ENCODE measurements at regions of chr6 and their contacts with region 1.

Region 1: DNA sequence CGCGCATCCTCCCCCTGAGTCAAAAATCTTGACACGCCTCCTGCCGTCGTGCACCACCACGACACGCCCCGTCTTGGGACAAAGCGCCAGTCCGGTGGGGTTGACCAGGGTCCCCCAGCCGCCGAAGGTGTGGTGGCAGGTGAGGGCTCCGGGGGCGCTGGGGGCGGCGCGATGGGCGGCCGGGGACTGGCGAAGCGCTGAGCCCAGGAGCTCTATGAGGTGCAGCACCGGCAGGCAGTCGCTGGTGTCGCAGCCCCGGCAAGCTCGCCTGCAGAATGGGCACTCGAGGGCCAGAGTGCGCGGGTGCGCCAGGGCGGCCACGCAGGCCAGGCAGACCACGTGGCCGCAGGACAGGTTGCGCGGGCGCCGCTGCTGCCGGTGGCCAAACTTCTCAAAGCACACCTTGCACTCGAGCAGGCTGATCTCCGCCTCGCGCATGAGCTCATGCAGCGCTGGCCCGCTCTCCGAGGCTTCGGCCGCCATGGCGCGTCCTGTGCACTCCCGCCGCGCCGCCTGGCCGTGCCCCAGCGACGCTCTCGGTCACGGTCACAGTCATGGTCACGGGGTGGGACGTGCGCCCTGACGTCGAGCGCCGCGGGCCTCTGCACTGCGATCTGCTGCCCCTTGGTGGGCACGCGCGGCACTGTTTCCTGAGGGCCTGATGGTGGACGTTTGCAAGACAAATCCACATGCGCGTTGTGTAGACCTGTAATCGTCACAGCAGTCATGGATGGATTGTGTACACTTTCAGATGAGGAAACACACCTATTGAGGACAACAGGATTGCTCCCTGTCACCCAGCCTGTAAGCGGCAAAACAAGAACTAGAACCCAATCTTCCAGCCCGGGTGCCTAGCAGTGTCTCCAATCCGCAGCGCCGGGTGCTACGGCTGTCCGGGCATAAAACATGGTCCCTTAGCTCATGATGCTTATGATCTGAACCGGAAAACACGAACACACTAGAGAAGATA is at the start of gene NHLRC1:
- DNase-seq: peak; percentile 70 to 87
- H3K4me3 ChIP-seq: peak within 1 kb of the TSS in 3 of 4 experiments; percentile 19 to 44 (median 35); a peak in 5 of 8 replicates
- H3K27ac ChIP-seq: no peak within 1 kb of the TSS
- H3K4me1 ChIP-seq: peaks cover 0 to 7% (median 3%) of the 10 kb centered on the region in 4 experiments; a peak in 4 of 7 replicates
- H3K27me3 ChIP-seq: peaks cover 0 to 20% (median 12%) of the 10 kb centered on the region in 4 experiments; a peak in 5 of 7 replicates
- CTCF ChIP-seq: peak; percentile 81 to 93 (median 90)
- EP300 ChIP-seq: no peak
- POLR2A ChIP-seq: no peak
- RAD21 ChIP-seq: peak; percentile 88 to 89
- total RNA-seq, gene NHLRC1: 0.58 and 0.82 TPM in 2 replicates

Region 2: DNA sequence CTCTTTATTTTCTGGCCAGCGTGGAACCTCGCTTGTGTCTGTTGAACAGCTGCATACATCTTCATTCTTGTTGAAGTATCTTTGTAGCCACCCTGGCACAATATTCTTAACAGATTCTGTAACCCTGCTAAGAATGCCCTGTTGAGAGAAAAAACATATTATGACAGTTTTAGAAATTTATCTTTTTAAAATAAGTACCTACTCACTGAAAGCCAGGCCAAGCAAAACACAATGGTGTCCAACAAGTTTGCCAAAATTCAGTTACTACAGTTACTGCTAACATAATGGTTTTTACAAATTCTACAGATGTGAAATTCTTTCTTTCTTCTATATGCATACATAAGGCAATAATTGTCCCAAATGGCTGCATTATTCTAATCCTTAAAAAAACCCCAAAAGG is 433.9 kb before region 1 on chr6:
- CTCF ChIA-PET with region 1: no interaction called
- POLR2A ChIA-PET with region 1: no interaction called
- DNase-seq: no peak
- H3K4me3 ChIP-seq: no peak overlapping the region
- H3K27ac ChIP-seq: no peak overlapping the region
- H3K4me1 ChIP-seq: peaks cover 0 to 6% (median 5%) of the 10 kb centered on the region in 4 experiments; a peak in 3 of 7 replicates
- H3K27me3 ChIP-seq: no peaks in the 10 kb centered on the region
- CTCF ChIP-seq: no peak
- EP300 ChIP-seq: no peak
- POLR2A ChIP-seq: no peak
- RAD21 ChIP-seq: no peak

Region 3: DNA sequence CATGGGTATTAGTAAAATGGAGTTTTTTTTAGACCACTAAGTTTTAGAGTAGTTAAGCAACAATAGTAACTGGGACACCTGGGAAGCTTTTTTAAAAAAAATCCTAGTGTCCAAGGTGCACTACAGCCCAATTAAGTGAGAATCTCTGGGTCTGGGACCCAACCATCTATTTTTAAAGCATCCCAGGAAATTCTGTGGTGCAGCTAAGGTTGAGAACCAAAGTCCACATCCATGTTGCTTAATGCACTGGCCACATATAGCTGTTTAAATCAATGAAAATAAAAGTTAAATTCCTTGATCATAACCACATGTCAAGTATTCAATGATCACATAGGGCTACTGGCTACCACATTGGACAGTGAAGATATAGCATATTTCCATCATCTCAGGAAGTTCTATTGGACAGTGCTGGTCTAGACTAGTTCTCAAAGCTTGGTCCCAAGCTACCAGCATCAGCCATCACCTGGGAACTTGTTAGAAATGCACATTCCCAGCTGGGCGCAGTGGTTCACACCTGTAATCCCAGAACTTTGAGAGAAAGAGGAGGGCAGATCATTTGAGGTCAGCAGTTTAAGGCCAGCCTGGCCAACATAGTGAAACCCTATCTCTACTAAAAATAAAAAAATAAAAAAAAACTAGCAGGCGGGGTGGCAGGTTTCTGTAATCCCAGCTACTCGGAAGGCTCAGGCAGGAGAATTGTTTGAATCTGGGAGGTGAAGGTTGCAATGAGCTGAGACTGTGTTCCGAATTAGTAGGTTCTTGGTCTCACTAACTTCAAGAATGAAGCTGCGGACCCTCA is 147.6 kb before region 1 on chr6:
- CTCF ChIA-PET with region 1: interaction called, 11 read pairs
- POLR2A ChIA-PET with region 1: interaction called, 4 read pairs
- DNase-seq: no peak
- H3K4me3 ChIP-seq: no peak overlapping the region
- H3K27ac ChIP-seq: no peak overlapping the region
- H3K4me1 ChIP-seq: peaks cover 0 to 6% (median 0%) of the 10 kb centered on the region in 4 experiments; a peak in 1 of 7 replicates
- H3K27me3 ChIP-seq: peaks cover 0 to 1% (median 0%) of the 10 kb centered on the region in 4 experiments; a peak in 1 of 7 replicates
- CTCF ChIP-seq: no peak
- EP300 ChIP-seq: no peak
- POLR2A ChIP-seq: no peak
- RAD21 ChIP-seq: no peak

Region 4: GRCh38 chr6:18019539-18020534 is 102.6 kb before region 1 on chr6:
- CTCF ChIA-PET with region 1: interaction called, 10 read pairs
- POLR2A ChIA-PET with region 1: no interaction called
- DNase-seq: no peak
- H3K4me3 ChIP-seq: no peak overlapping the region
- H3K27ac ChIP-seq: no peak overlapping the region
- H3K4me1 ChIP-seq: peaks cover 5 to 18% (median 15%) of the 10 kb centered on the region in 4 experiments
- H3K27me3 ChIP-seq: no peaks in the 10 kb centered on the region
- CTCF ChIP-seq: no peak
- EP300 ChIP-seq: no peak
- POLR2A ChIP-seq: no peak
- RAD21 ChIP-seq: no peak

Region 5: DNA sequence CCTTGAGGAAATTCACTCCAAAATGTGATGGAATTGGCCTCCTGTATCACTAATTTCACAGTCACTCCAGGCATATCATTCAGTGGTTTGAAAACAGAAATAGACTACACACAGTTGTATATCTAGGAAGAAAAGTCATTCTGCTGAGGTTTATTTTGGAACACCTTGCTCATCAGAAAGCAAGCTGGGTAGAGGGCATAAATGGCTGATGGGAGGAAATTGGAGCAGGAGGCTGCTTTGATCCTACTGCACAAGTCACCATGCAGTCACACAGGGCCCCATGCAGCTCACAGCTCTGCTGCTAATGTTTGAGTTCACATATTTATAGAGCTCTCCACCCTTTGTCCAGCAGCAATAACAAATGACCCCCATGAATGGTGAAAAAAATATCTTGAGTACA is 12.2 kb before region 1 on chr6:
- CTCF ChIA-PET with region 1: interaction called, 11 read pairs
- POLR2A ChIA-PET with region 1: no interaction called
- DNase-seq: no peak
- H3K4me3 ChIP-seq: no peak overlapping the region
- H3K27ac ChIP-seq: no peak overlapping the region
- H3K4me1 ChIP-seq: peaks cover 0 to 2% (median 0%) of the 10 kb centered on the region in 4 experiments; a peak in 1 of 7 replicates
- H3K27me3 ChIP-seq: no peaks in the 10 kb centered on the region
- CTCF ChIP-seq: no peak
- EP300 ChIP-seq: no peak
- POLR2A ChIP-seq: no peak
- RAD21 ChIP-seq: no peak

Region 6: DNA sequence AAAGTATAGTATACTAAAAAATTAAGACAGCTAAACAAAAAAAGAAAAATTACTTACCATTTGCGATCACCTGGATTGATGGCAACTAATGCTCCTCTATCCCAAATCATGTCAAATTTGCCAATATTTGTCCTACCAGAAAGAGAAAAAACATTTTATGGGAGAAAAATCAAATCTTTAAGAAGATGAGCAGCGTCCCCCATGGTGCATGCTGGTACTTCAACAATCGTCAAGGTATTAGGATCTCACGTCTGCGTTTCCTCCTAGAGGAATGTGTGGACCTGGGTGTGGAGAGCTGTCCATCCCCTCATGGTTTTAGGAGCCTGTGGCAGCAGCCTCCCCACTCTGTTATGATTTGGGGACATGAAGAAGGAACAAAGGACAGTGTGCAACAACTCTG is 16.5 kb after region 1 on chr6:
- CTCF ChIA-PET with region 1: interaction called, 27 read pairs
- POLR2A ChIA-PET with region 1: no interaction called
- DNase-seq: no peak
- H3K4me3 ChIP-seq: no peak overlapping the region
- H3K27ac ChIP-seq: no peak overlapping the region
- H3K4me1 ChIP-seq: no peaks in the 10 kb centered on the region
- H3K27me3 ChIP-seq: no peaks in the 10 kb centered on the region
- CTCF ChIP-seq: no peak
- EP300 ChIP-seq: no peak
- POLR2A ChIP-seq: no peak
- RAD21 ChIP-seq: peak; percentile 21 to 27; a peak in 2 of 4 replicates

Region 7: DNA sequence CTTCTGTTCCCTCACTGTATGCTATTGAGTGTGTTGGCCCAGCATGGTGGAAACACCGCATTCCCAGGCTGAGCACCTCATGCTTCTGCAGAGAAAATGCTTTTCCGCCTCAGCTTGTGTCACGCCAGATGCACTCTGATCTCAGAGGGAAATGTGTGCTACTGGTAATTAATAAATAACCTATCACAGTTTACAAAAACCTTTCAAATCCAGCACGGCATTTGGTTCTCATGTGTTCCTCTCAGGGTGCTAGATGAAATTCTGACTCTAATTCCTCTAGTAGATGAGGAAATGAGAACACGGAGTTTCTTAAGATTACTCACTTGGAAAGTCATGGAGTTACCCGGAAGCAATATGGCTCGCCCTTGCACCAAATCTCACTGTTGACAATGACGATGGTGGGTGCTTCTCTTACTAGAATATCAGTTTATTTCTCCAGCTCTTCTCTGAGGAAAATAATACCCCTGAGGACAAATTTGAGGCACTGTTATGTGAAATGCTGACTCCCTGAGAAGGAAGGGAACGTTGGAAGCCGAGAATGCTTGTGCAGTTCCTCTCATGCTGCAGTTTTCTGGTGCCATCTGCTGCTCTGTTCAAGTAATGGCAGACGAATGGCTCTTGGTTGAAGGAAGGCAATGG is 381.3 kb after region 1 on chr6:
- CTCF ChIA-PET with region 1: interaction called, 13 read pairs
- POLR2A ChIA-PET with region 1: no interaction called
- DNase-seq: peak; percentile 23 to 57
- H3K4me3 ChIP-seq: no peak overlapping the region
- H3K27ac ChIP-seq: no peak overlapping the region
- H3K4me1 ChIP-seq: no peaks in the 10 kb centered on the region
- H3K27me3 ChIP-seq: no peaks in the 10 kb centered on the region
- CTCF ChIP-seq: peak; percentile 57 to 96 (median 95)
- EP300 ChIP-seq: no peak
- POLR2A ChIP-seq: no peak
- RAD21 ChIP-seq: peak; percentile 100

Measured in H1 (cell line).